Mammary epithelial cell (primary cell): ENCODE measurements at regions of chr13 and their contacts with region 1.

Region 1: GRCh38 chr13:49976314-49977258 is 20.3 kb upstream of the TRIM13 start:
- DNase-seq: peak; percentile 69
- H3K4me3 ChIP-seq: no peak overlapping the region
- H3K27ac ChIP-seq: peak overlapping the region; percentile 25
- H3K4me1 ChIP-seq: peaks cover 11% of the 10 kb centered on the region
- H3K27me3 ChIP-seq: no peaks in the 10 kb centered on the region
- CTCF ChIP-seq: peak; percentile 92 to 95

Region 2: GRCh38 chr13:49443704-49444523 is 532.7 kb before region 1 on chr13 and contains the starts of genes CAB39L and SETDB2:
- CTCF ChIA-PET with region 1: no interaction called
- dilution Hi-C with region 1: no loop called
- in situ Hi-C with region 1: no loop called
- intact Hi-C with region 1: no loop called
- DNase-seq: peak; percentile 100
- H3K4me3 ChIP-seq: peak within 1 kb of the TSS; percentile 69 to 95 (median 70)
- H3K27ac ChIP-seq: peak within 1 kb of the TSS; percentile 72
- H3K4me1 ChIP-seq: peaks cover 2% of the 10 kb centered on the region
- H3K27me3 ChIP-seq: no peaks in the 10 kb centered on the region
- CTCF ChIP-seq: peak; percentile 22 to 55
- total RNA-seq, gene CAB39L: 5.7 to 8.0 TPM
- total RNA-seq, gene SETDB2: 8.1 to 10.2 TPM

Region 3: GRCh38 chr13:49908637-49909036 is 67.9 kb before region 1 on chr13:
- CTCF ChIA-PET with region 1: no interaction called
- dilution Hi-C with region 1: no loop called
- in situ Hi-C with region 1: no loop called
- intact Hi-C with region 1: no loop called
- DNase-seq: no peak
- H3K4me3 ChIP-seq: no peak overlapping the region
- H3K27ac ChIP-seq: no peak overlapping the region
- H3K4me1 ChIP-seq: peaks cover 3% of the 10 kb centered on the region
- H3K27me3 ChIP-seq: no peaks in the 10 kb centered on the region
- CTCF ChIP-seq: no peak

Region 4: GRCh38 chr13:50006426-50007135 is 30.0 kb after region 1 on chr13:
- CTCF ChIA-PET with region 1: no interaction called
- dilution Hi-C with region 1: no loop called
- in situ Hi-C with region 1: no loop called
- intact Hi-C with region 1: no loop called
- DNase-seq: no peak
- H3K4me3 ChIP-seq: no peak overlapping the region
- H3K27ac ChIP-seq: no peak overlapping the region
- H3K4me1 ChIP-seq: no peaks in the 10 kb centered on the region
- H3K27me3 ChIP-seq: no peaks in the 10 kb centered on the region
- CTCF ChIP-seq: no peak

Region 5: GRCh38 chr13:50284540-50284939 is 308.0 kb after region 1 on chr13:
- CTCF ChIA-PET with region 1: no interaction called
- dilution Hi-C with region 1: no loop called
- in situ Hi-C with region 1: no loop called
- intact Hi-C with region 1: loop called (anchors 10 kb)
- DNase-seq: no peak
- H3K4me3 ChIP-seq: no peak overlapping the region
- H3K27ac ChIP-seq: no peak overlapping the region
- H3K4me1 ChIP-seq: no peaks in the 10 kb centered on the region
- H3K27me3 ChIP-seq: no peaks in the 10 kb centered on the region
- CTCF ChIP-seq: no peak

Region 6: DNA sequence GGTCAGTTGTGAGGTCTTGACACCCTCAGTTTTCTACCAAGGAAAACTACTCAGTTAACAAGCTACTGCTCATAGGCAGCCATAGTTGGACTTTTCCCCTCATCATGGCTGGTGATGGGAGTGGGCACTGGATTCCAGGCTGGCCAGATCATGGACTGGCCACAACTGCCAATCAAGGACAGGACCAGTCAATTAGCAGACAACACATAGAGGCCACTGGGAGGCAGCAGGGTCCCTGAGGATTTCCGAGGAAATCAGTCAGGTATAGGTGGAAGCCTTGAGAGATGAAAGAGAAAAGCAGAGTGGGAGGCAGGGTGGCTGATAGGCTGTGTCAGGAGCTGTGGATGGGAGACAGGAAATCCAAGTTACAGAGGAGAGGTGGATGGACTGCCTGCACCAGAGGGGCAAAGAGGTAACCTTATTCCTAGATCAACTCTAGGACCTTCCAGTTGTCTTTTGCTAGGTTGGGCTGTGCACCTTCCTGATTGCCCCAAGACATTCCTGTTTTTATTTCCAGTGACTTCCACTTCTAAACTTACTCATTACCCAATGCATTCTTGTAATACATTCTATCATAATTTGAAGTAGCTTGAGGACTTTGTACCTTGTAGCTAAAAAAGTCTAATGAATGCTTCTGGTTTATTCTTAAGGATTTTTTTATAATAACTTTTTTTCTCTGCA is 400.4 kb after region 1 on chr13:
- CTCF ChIA-PET with region 1: no interaction called
- dilution Hi-C with region 1: no loop called
- in situ Hi-C with region 1: no loop called
- intact Hi-C with region 1: loop called (anchors 5 kb)
- DNase-seq: no peak
- H3K4me3 ChIP-seq: no peak overlapping the region
- H3K27ac ChIP-seq: no peak overlapping the region
- H3K4me1 ChIP-seq: no peaks in the 10 kb centered on the region
- H3K27me3 ChIP-seq: no peaks in the 10 kb centered on the region
- CTCF ChIP-seq: peak; percentile 15 to 49